ENCODE measurements at regions of chr19 and their contacts with region 1.

Region 1: GRCh38 chr19:51926784-51927742 is at the start of gene ZNF613:
- DNase-seq: peak; percentile 47 to 91
- H3K4me3 ChIP-seq: peak within 1 kb of the TSS; percentile 81 to 87
- H3K27ac ChIP-seq: peak within 1 kb of the TSS; percentile 70 to 71
- H3K4me1 ChIP-seq: peaks cover 0 to 6% of the 10 kb centered on the region in 2 donors
- H3K27me3 ChIP-seq: no peaks in the 10 kb centered on the region
- CTCF ChIP-seq: peak in 2 of 3 experiments; percentile 29 to 44
- total RNA-seq, gene ZNF613: 4.0 TPM

Region 2: DNA sequence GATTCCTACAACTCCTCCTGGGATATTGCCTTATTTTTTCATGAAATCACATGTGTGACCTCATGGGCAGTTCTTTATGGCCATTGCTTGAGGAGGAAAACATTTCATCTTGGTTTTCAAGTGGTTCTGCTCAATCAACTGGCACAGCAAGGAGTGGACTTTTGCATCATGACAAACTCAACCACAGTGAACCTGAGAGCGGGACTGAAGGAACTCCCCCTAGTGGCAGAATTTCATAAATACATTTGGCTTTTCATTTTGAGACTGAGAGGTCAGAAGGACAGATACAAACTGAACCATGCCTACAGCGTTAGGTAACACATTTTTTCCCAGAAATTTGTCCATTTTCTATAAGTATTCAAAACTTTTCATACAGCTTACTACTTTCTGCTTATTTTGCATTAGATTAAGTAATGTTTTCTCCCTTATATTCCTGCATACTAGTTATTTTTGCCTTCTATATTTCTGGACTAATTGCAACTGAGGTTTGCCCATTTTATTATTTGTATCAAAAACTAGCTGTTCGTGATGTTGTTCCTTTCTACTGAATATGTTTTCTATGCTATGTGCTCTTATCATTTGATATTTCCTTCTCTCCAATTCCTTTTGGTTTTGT is 412.1 kb before region 1 on chr19:
- intact Hi-C with region 1: no loop called
- DNase-seq: no peak
- H3K4me3 ChIP-seq: no peak overlapping the region
- H3K27ac ChIP-seq: no peak overlapping the region
- H3K4me1 ChIP-seq: no peaks in the 10 kb centered on the region
- H3K27me3 ChIP-seq: no peaks in the 10 kb centered on the region
- CTCF ChIP-seq: peak; percentile 45 to 64 (median 46)

Region 3: DNA sequence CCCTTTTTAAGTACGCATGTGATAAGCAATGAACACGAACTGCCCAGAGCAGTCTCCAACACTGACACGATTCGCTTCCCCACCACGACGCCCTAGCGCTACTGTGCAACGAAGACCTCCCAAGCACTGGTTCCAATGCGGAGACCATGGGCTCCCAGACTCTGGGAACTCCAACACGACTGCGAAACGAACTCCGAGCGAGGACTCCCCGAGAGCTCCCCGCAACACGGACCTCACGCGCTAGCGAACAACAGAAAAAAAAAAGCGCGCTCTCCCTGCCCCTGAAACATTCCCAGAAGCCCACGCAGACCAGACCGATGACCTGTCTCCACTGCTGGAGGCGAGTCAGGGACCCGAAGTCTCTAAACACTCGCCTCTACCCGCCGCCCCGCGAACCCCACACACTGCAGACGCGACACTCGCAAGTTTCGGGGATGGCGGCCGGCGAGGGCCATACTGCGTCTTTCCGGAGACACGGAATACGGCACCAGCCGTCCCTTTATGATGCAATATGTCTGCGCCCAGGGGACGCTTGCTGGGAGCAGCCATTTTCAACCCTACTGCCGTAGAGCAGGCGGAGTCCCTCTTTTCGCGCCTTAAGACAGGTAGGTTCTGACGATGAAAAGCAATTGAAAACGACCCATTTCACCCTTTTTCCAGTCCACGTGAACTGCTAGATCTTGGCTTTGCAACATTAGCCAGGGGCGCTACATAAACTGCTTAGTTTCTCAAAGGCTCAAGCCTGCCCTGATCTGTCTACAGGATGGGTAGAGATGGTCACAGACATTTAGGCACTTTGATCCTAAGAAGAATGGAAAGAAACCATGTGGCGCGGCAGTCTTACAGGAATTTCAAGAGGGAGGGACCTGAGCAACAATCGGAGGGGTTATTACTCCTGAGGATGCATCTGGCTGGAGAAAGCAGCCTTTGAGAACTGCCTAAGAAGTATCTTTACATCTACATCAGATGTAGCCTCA is 39.3 kb before region 1 on chr19 and contains the start of gene ZNF577:
- intact Hi-C with region 1: loop called (anchors 2 kb)
- DNase-seq: peak; percentile 53 to 93
- H3K4me3 ChIP-seq: peak within 1 kb of the TSS; percentile 59 to 85
- H3K27ac ChIP-seq: peak within 1 kb of the TSS; percentile 60 to 74
- H3K4me1 ChIP-seq: no peaks in the 10 kb centered on the region
- H3K27me3 ChIP-seq: no peaks in the 10 kb centered on the region
- CTCF ChIP-seq: no peak
- total RNA-seq, gene ZNF577: 3.8 TPM

Region 4: DNA sequence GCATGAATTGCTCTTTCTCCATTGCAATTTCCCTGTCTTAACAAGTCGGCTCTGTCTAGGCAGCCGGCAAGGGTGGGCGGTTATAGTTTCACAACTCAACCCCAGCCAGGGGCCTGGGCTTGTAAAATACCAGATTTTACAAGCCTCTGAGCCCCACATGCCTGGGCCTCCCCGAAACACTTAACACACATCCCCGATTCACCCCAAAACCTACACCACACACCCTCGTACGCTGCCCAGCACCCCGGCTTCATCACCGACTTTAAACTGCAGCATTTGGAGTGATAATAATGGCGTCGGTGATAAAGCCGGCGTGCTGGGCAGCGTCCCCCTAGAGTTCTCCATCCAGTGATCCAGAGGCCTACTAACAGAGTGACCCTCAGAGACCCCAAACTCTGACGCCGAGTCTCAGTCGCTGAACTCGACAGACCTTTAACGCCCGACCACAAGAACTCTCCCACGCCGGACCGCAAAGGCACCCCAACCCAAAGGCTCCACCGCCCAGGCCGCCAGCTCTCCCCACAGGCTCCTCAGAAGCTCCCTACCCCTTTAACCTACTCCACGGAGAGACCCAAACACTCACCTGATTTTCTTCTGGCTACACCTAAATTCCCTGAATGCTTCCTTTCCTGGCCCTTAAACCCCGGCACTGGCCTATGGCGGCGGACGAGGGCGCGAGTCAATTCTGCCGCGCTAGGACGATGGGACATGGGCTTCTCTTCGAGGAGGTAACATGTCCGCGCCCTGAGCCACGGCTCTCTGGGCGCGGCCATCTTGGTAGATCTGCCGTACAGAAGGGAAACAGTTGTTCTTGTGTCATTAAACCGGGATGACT is 22.5 kb before region 1 on chr19 and contains the start of gene ZNF649:
- intact Hi-C with region 1: loop called (anchors 1 kb)
- DNase-seq: peak; percentile 17 to 88
- H3K4me3 ChIP-seq: peak within 1 kb of the TSS; percentile 76 to 79
- H3K27ac ChIP-seq: peak within 1 kb of the TSS; percentile 70 to 76
- H3K4me1 ChIP-seq: peaks cover 0 to 4% of the 10 kb centered on the region in 2 donors
- H3K27me3 ChIP-seq: no peaks in the 10 kb centered on the region
- CTCF ChIP-seq: no peak
- total RNA-seq, gene ZNF649: 4.7 TPM

Region 5: DNA sequence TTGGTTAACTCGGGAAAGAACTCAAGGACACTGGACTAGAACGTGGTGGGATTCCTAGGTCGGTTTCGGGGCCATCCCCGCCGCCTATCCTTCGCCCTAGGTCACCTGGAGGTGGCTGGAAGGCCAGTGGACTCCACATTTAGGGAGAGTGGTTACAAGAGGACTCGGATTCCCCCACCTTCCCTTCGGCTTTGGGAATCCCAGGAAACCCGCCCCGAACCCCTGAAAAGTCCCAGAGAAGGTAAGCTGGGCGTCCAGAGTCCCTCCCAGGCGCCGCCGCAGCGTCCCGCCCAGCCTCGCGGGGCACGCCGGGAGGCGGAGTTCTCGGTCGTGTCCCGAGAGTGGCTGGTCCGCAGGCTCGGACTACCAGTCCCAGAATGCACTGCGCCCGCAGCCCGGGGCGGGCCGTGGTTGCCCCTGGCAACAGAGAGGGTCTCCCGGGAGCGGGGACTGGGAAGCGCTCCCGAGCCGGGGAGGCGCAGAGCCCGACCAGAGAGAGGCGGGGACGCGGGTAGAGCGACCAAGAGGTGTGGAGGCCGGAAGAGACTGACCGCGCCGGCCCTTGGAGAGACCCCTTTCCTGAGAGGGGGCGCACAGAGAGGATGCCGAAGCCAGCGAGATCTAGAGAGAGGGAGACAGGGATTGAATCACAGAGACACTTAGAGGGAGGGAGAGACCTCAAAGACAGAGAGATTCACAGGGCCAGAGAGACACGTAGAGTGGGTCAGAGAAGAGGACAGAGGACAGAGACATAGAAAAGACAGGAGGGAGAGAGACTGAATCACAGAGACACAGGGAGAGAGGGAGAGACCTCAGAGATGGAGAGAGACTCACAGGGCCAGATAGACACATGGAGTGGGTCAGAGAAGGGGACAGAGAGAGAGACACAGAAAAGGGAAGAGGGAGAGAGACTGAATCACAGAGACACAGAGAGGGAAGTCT is 1952.3 kb after region 1 on chr19:
- intact Hi-C with region 1: loop called (anchors 10 kb)
- DNase-seq: peak; percentile 66 to 97
- H3K4me3 ChIP-seq: peak overlapping the region; percentile 61 to 67
- H3K27ac ChIP-seq: no peak overlapping the region
- H3K4me1 ChIP-seq: peaks cover 6 to 30% of the 10 kb centered on the region in 2 donors
- H3K27me3 ChIP-seq: peaks cover 21% of the 10 kb centered on the region
- CTCF ChIP-seq: no peak

Measured in ascending aorta (tissue), 2 donors.